Activated CD8-positive, alpha-beta T cell treated with anti-CD3 and anti-CD28 coated beads for 36 hours (primary cell): ENCODE measurements at regions of chr19 and their contacts with region 1.

Region 1: DNA sequence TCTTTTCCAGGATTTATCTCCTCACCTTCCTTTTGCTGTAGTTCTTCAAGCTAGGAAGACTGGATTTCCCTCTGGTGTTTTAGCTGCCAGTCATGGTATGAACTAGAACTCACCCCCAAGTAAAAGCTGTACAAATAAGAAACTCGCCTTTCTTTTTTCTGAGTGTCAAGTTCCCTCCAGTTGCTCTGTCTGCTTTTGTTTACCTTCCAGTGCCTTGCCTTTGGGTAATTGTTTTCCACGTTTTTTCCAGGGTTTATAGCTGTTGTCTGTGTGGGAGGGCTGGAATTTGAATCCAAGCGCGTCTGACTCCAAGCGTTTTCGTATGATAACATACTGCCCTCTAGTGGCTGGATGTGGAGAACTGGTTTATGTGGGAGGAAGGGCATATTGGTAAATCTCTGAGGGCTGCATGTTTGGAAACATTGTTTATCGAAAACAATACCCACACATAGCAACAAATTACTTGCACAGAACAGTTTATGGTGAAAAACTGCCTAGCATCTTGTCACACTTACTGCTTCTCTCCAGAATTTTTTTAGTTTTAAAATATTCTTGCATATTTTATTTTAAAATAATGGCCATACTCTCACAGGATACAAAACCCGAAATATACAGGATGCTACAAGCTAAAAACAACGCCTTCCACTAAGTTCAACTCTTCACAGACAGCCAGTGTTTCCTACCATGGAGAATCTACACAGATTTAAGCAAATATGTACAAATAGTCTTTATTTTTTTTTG is 19.2 kb downstream of the RCN3 start:
- DNase-seq: peak; percentile 78
- ATAC-seq: peak; percentile 63
- H3K4me3 Mint-ChIP-seq: peak overlapping the region; percentile 64
- H3K27ac Mint-ChIP-seq: peak overlapping the region; percentile 54
- H3K4me1 Mint-ChIP-seq: peaks cover 28% of the 10 kb centered on the region
- H3K27me3 Mint-ChIP-seq: no peaks in the 10 kb centered on the region
- CTCF ChIP-seq: peak; percentile 93

Region 2: DNA sequence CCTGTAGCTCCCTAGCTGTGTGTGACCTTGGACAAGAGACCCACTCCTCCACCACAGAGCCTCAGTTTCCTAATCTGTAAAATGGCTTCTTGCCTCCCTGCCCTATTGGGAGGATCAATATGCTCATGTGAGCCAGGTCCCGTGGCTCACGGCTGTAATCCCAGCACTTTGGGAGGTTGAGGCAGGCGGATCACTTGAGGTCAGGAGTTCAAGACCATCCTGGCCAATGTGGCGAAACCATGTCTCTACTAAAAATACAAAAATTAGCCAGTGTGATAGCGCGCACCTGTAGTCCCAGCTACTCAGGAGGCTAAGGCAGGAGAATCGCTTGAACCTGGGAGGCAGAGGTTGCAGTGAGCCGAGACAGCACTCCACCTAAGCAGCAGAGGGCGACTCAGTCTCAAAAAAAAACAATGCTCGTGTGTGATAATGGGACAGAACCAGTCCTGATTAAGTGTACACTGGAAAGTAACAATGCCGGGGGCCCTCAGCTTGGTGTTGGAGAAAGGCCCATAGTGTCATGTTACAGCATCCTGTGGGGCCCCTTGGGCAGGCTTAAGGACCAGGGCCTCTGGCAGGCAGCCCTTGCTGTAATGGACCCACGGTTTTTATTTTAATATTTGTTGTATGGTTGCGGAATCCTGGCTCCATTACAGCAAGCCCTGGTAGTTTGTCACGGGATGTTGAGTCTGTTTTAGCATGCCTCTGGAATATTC is 44.0 kb before region 1 on chr19:
- CTCF ChIA-PET with region 1: interaction called, 232 read pairs
- POLR2A ChIA-PET with region 1: interaction called, 8 read pairs
- intact Hi-C with region 1: loop called (anchors 2 kb)
- DNase-seq: peak; percentile 60
- ATAC-seq: no peak
- H3K4me3 Mint-ChIP-seq: no peak overlapping the region
- H3K27ac Mint-ChIP-seq: no peak overlapping the region
- H3K4me1 Mint-ChIP-seq: peaks cover 41% of the 10 kb centered on the region
- H3K27me3 Mint-ChIP-seq: no peaks in the 10 kb centered on the region
- CTCF ChIP-seq: peak; percentile 48

Region 3: DNA sequence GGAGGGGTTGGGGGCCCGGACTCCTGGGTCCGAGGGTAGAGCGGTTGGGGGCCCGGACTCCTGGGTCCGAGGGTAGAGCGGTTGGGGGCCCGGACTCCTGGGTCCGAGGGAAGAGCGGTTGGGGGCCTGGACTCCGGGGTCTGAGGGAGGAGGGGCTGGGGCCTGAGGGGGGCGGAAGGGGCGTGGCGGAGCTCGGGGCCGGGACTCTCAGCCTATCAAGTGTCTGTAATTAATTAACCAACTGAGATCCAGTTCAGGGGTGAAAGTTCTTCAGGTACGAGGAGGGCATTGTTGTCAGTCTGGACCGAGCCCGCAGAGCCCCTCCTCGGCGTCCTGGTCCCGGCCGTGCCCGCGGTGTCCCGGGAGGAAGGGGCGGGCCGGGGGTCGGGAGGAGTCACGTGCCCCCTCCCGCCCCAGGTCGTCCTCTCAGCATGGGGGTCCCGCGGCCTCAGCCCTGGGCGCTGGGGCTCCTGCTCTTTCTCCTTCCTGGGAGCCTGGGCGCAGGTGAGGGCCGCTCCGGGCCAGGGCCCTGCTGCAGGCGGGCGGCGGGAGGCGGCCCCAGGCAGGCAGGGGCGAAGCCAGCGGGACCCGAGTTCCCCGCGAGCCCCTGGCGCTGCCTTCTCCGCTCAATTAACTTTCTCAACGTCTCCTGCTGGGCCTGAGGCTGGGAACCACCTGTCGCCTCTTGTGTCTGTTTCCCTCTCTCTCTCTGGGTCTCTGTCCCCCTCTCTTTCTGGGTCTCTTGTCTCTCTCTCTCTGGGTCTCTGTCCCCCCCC is 33.8 kb before region 1 on chr19:
- CTCF ChIA-PET with region 1: interaction called, 232 read pairs
- POLR2A ChIA-PET with region 1: no interaction called
- intact Hi-C with region 1: no loop called
- DNase-seq: peak; percentile 58
- ATAC-seq: peak; percentile 75
- H3K4me3 Mint-ChIP-seq: peak overlapping the region; percentile 76
- H3K27ac Mint-ChIP-seq: peak overlapping the region; percentile 79
- H3K4me1 Mint-ChIP-seq: peaks cover 19% of the 10 kb centered on the region
- H3K27me3 Mint-ChIP-seq: no peaks in the 10 kb centered on the region
- CTCF ChIP-seq: no peak

Region 4: DNA sequence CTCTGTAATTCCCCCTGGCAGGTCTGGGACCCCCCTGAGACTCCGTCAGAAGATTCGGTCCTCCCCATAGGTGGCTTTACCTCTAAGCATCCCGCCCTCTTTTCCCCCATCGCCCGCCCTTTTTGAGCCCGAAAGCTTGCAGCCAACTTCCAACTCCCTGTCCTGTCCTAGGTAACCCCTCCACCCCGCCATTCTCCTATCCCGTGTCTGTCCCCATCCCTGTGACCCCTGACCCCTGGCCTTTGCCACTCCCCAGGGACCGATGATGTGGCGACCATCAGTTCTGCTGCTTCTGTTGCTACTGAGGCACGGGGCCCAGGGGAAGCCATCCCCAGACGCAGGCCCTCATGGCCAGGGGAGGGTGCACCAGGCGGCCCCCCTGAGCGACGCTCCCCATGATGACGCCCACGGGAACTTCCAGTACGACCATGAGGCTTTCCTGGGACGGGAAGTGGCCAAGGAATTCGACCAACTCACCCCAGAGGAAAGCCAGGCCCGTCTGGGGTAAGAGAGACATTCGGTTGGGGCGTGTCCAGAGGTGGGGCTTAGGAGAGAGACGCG is 18.7 kb before region 1 on chr19:
- CTCF ChIA-PET with region 1: interaction called, 47 read pairs
- POLR2A ChIA-PET with region 1: interaction called, 6 read pairs
- intact Hi-C with region 1: no loop called
- DNase-seq: no peak
- ATAC-seq: no peak
- H3K4me3 Mint-ChIP-seq: peak overlapping the region; percentile 64
- H3K27ac Mint-ChIP-seq: no peak overlapping the region
- H3K4me1 Mint-ChIP-seq: peaks cover 14% of the 10 kb centered on the region
- H3K27me3 Mint-ChIP-seq: no peaks in the 10 kb centered on the region
- CTCF ChIP-seq: no peak

Region 5: GRCh38 chr19:49533551-49534488 is 13.2 kb before region 1 on chr19:
- CTCF ChIA-PET with region 1: interaction called, 47 read pairs
- POLR2A ChIA-PET with region 1: interaction called, 6 read pairs
- intact Hi-C with region 1: no loop called
- DNase-seq: peak; percentile 88
- ATAC-seq: peak; percentile 82
- H3K4me3 Mint-ChIP-seq: peak overlapping the region; percentile 80
- H3K27ac Mint-ChIP-seq: peak overlapping the region; percentile 81
- H3K4me1 Mint-ChIP-seq: peaks cover 17% of the 10 kb centered on the region
- H3K27me3 Mint-ChIP-seq: no peaks in the 10 kb centered on the region
- CTCF ChIP-seq: peak; percentile 65

Region 6: DNA sequence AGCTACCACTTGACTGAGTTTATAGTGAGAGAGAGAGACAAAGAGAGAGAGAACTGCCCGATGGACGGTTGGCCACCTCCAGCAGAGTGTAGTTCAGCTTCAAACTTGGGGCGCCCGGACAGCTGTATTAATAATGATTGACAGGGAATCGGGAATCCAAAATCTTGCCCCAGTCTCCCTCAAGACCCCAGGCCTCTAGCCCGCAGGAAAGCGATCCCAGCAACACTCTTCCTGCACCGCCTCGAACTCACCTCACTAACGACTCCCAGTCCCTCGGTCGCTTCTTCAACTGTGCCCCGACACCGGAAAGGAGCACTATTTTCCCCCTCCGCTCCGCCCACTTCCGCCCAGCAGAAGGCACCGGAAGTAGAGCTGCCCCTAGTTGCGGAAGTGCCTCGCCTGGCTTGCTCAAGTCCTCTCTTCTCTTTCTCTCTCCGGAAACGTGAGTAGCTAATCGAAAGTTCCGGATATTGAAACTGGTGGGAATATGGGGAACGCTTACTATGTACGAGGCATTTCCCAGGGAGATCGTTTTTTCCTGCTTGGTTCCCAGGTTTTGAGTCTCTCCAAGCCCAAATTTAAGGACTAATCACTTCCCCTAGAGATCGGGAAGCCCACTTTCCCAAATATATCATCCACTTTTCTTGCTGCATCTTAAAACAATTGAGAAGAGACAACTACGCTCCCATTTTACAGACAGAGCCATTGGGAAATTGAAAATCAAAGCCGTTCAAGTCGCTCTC is 33.4 kb after region 1 on chr19 and contains the start of gene NOSIP:
- CTCF ChIA-PET with region 1: interaction called, 24 read pairs
- POLR2A ChIA-PET with region 1: interaction called, 4 read pairs
- intact Hi-C with region 1: no loop called
- DNase-seq: peak; percentile 97
- ATAC-seq: peak; percentile 98
- H3K4me3 Mint-ChIP-seq: peak within 1 kb of the TSS; percentile 95
- H3K27ac Mint-ChIP-seq: peak within 1 kb of the TSS; percentile 90
- H3K4me1 Mint-ChIP-seq: peaks cover 32% of the 10 kb centered on the region
- H3K27me3 Mint-ChIP-seq: no peaks in the 10 kb centered on the region
- CTCF ChIP-seq: no peak
- total RNA-seq, gene NOSIP: 75.6 to 79.4 TPM

Region 7: GRCh38 chr19:49635530-49636198 is 88.7 kb after region 1 on chr19:
- CTCF ChIA-PET with region 1: no interaction called
- POLR2A ChIA-PET with region 1: no interaction called
- intact Hi-C with region 1: no loop called
- DNase-seq: no peak
- ATAC-seq: no peak
- H3K4me3 Mint-ChIP-seq: no peak overlapping the region
- H3K27ac Mint-ChIP-seq: no peak overlapping the region
- H3K4me1 Mint-ChIP-seq: peaks cover 17% of the 10 kb centered on the region
- H3K27me3 Mint-ChIP-seq: no peaks in the 10 kb centered on the region
- CTCF ChIP-seq: no peak